PC-3 (cell line): ENCODE measurements at regions of chr19 and their contacts with region 1.

Region 1: DNA sequence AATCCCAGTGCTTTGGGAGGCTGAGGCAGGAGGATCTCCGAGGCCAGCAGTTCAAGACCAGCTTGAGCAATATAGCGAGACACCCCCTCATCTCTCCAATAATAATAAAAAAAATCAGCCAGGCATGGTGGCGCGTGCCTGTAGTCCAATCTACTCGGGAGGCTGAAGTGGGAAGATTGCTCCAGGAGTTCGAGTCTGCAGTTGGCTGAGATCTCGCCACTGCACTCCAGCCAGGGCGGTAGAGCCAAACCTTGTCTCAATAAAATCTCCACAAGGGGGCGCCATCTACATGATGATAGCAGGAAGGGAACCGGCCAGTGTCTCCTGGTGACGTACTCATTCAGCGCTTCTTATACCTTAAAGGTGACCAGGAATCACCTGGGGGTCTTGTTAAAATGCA is 13.6 kb upstream of the C5AR1 start:
- DNase-seq: peak; percentile 87
- ATAC-seq: peak; percentile 82
- H3K4me3 ChIP-seq: no peak overlapping the region
- H3K27ac ChIP-seq: no peak overlapping the region
- H3K4me1 ChIP-seq: no peaks in the 10 kb centered on the region
- H3K27me3 ChIP-seq: no peaks in the 10 kb centered on the region
- CTCF ChIP-seq: peak; percentile 65

Region 2: DNA sequence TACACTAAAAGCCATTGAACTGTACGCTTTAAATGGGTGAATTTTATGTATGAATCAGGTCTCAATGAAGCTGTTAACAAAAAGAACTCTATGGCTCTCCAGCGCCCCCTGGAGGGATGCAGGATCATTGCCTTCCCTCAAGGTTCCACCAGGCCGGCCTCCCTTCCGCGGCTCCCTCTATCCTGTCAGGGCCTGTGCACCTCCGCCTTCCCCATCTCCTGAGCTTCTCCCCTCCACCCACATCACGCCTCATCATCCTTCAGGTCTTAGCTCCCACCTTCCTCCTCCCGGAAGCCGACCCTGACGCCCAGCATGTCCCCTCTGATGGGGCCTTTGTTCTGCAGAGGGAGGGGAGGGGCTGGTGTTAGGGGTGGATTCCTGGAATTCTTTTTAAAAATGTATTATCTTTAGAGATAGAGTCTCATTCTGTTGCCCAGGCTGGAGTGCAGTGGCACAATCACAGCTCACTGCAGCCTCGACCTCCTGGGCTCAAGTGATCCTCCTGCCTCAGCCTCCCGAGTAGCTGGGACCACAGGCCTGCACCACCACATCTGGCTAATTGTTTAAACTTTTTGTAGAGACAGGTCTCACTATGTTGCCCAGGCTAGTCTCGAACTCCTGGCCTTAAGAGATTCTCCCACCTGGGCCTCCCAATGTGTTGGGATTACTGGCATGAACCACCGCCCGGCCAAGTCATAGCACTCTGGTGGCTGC is 95.6 kb after region 1 on chr19:
- CTCF ChIA-PET with region 1: no interaction called
- POLR2A ChIA-PET with region 1: no interaction called
- intact Hi-C with region 1: loop called (anchors 1 kb)
- DNase-seq: peak; percentile 72
- ATAC-seq: peak; percentile 85
- H3K4me3 ChIP-seq: no peak overlapping the region
- H3K27ac ChIP-seq: no peak overlapping the region
- H3K4me1 ChIP-seq: no peaks in the 10 kb centered on the region
- H3K27me3 ChIP-seq: no peaks in the 10 kb centered on the region
- CTCF ChIP-seq: peak; percentile 80

Region 3: GRCh38 chr19:47428177-47428894 is 132.3 kb after region 1 on chr19:
- CTCF ChIA-PET with region 1: no interaction called
- POLR2A ChIA-PET with region 1: no interaction called
- intact Hi-C with region 1: loop called (anchors 5 kb)
- DNase-seq: peak; percentile 96
- ATAC-seq: peak; percentile 94
- H3K4me3 ChIP-seq: peak overlapping the region; percentile 62
- H3K27ac ChIP-seq: peak overlapping the region; percentile 27; the same call in 1 of the 2 replicates
- H3K4me1 ChIP-seq: peaks cover 12% of the 10 kb centered on the region; the same call in 1 of the 2 replicates
- H3K27me3 ChIP-seq: peaks cover 6% of the 10 kb centered on the region
- CTCF ChIP-seq: no peak